ENCODE measurements at regions of chr4 and their contacts with region 1.

Region 1: GRCh38 chr4:20395160-20395773 is 143.6 kb downstream of the SLIT2 start:
- DNase-seq: no peak
- ATAC-seq: peak; percentile 61; the same call in 2 of the 3 replicates
- H3K4me3 ChIP-seq: no peak overlapping the region
- H3K27ac ChIP-seq: no peak overlapping the region
- H3K4me1 ChIP-seq: no peaks in the 10 kb centered on the region
- H3K27me3 ChIP-seq: no peaks in the 10 kb centered on the region
- CTCF ChIP-seq: peak; percentile 57 to 66 (median 63)
- EP300 ChIP-seq: no peak
- POLR2A ChIP-seq: no peak
- RAD21 ChIP-seq: peak; percentile 51

Region 2: DNA sequence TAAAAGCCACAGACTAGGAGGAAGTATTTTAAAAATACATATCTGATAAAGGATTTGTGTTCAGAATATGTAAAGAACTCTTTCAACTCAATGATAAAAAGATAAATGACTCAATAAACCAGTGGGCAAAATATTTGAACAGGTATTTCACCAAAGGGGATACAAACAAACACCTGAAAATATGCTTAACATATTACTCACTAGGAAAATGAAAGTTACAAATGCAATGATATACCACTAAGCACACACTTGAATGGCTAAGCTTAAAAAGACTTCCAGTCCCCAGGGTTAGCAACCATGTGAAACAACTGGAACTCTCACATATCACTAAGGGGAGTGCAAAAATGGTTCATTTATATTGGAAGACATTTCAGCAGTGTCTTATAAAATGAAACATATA is 12.0 kb before region 1 on chr4:
- CTCF ChIA-PET with region 1: interaction called, 27 read pairs
- POLR2A ChIA-PET with region 1: no interaction called
- RAD21 ChIA-PET with region 1: no interaction called
- SMC1A ChIA-PET with region 1: no interaction called
- in situ Hi-C with region 1: no loop called
- intact Hi-C with region 1: no loop called
- DNase-seq: no peak
- ATAC-seq: no peak
- H3K4me3 ChIP-seq: no peak overlapping the region
- H3K27ac ChIP-seq: no peak overlapping the region
- H3K4me1 ChIP-seq: no peaks in the 10 kb centered on the region
- H3K27me3 ChIP-seq: no peaks in the 10 kb centered on the region
- CTCF ChIP-seq: no peak
- EP300 ChIP-seq: no peak
- POLR2A ChIP-seq: no peak
- RAD21 ChIP-seq: no peak

Region 3: GRCh38 chr4:20416800-20417199 is 21.5 kb after region 1 on chr4:
- CTCF ChIA-PET with region 1: interaction called, 30 read pairs
- POLR2A ChIA-PET with region 1: no interaction called
- RAD21 ChIA-PET with region 1: no interaction called
- SMC1A ChIA-PET with region 1: interaction called, 4 read pairs
- in situ Hi-C with region 1: no loop called
- intact Hi-C with region 1: no loop called
- DNase-seq: no peak
- ATAC-seq: no peak
- H3K4me3 ChIP-seq: no peak overlapping the region
- H3K27ac ChIP-seq: no peak overlapping the region
- H3K4me1 ChIP-seq: no peaks in the 10 kb centered on the region
- H3K27me3 ChIP-seq: no peaks in the 10 kb centered on the region
- CTCF ChIP-seq: no peak
- EP300 ChIP-seq: no peak
- POLR2A ChIP-seq: no peak
- RAD21 ChIP-seq: no peak

Region 4: GRCh38 chr4:20464381-20464780 is 69.1 kb after region 1 on chr4:
- CTCF ChIA-PET with region 1: no interaction called
- POLR2A ChIA-PET with region 1: no interaction called
- RAD21 ChIA-PET with region 1: no interaction called
- SMC1A ChIA-PET with region 1: no interaction called
- in situ Hi-C with region 1: no loop called
- intact Hi-C with region 1: no loop called
- DNase-seq: no peak
- ATAC-seq: no peak
- H3K4me3 ChIP-seq: no peak overlapping the region
- H3K27ac ChIP-seq: no peak overlapping the region
- H3K4me1 ChIP-seq: no peaks in the 10 kb centered on the region
- H3K27me3 ChIP-seq: no peaks in the 10 kb centered on the region
- CTCF ChIP-seq: no peak
- EP300 ChIP-seq: no peak
- POLR2A ChIP-seq: no peak
- RAD21 ChIP-seq: no peak

Region 5: DNA sequence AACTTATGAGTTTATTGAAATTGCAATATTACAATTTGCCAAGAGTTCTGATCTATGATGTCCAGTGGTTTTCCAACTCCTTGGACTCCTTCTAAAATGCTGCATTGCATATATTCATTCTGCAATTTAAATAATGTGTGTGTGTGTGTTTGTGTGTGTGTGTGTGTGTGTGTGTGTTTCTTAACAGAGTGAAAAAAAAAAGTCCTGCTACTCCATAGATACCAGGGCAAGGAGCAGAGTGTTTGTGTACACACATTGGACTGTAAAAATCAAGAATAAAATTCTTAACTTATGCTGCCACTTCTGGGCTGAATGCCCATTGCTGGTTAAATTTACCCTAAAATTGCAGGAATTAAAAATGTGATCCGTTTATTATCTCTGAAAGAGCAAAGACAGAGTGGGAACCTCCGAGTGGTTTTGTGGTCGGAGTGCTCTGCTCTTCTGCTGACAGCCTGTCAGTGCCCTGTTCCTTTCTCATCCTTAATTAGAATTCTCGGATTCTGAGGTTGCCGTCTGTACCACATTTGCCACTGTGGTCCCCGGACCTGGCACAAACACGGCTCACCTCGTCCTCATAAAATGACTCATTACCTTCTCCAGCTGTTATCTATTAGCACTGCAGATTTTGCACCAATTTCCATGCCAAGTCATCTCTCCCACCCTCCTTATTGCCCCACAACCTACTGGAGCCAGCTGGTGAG is 1197.9 kb after region 1 on chr4:
- CTCF ChIA-PET with region 1: no interaction called
- POLR2A ChIA-PET with region 1: no interaction called
- RAD21 ChIA-PET with region 1: no interaction called
- SMC1A ChIA-PET with region 1: no interaction called
- in situ Hi-C with region 1: no loop called
- intact Hi-C with region 1: loop called (anchors 10 kb)
- DNase-seq: no peak
- ATAC-seq: no peak
- H3K4me3 ChIP-seq: no peak overlapping the region
- H3K27ac ChIP-seq: no peak overlapping the region
- H3K4me1 ChIP-seq: no peaks in the 10 kb centered on the region
- H3K27me3 ChIP-seq: no peaks in the 10 kb centered on the region
- CTCF ChIP-seq: no peak
- EP300 ChIP-seq: no peak
- POLR2A ChIP-seq: no peak
- RAD21 ChIP-seq: no peak

Measured in GM12878 (cell line).